ENCODE measurements at regions of chr7 and their contacts with region 1.

Region 1: GRCh38 chr7:134254311-134254710 is 62.4 kb downstream of the SLC35B4 start:
- DNase-seq: no peak
- H3K4me3 ChIP-seq: no peak overlapping the region
- H3K27ac ChIP-seq: no peak overlapping the region
- H3K4me1 ChIP-seq: no peaks in the 10 kb centered on the region
- H3K27me3 ChIP-seq: no peaks in the 10 kb centered on the region
- CTCF ChIP-seq: peak; percentile 16 to 60

Region 2: GRCh38 chr7:134140889-134141867 is 113.1 kb before region 1 on chr7:
- CTCF ChIA-PET with region 1: no interaction called
- dilution Hi-C with region 1: no loop called
- in situ Hi-C with region 1: no loop called
- intact Hi-C with region 1: loop called (anchors 2 kb)
- DNase-seq: peak; percentile 32
- H3K4me3 ChIP-seq: no peak overlapping the region
- H3K27ac ChIP-seq: no peak overlapping the region
- H3K4me1 ChIP-seq: no peaks in the 10 kb centered on the region
- H3K27me3 ChIP-seq: no peaks in the 10 kb centered on the region
- CTCF ChIP-seq: peak; percentile 86 to 95

Region 3: GRCh38 chr7:134483296-134483695 is 229.0 kb after region 1 on chr7:
- CTCF ChIA-PET with region 1: no interaction called
- dilution Hi-C with region 1: no loop called
- in situ Hi-C with region 1: no loop called
- intact Hi-C with region 1: no loop called
- DNase-seq: no peak
- H3K4me3 ChIP-seq: no peak overlapping the region
- H3K27ac ChIP-seq: no peak overlapping the region
- H3K4me1 ChIP-seq: peaks cover 15% of the 10 kb centered on the region
- H3K27me3 ChIP-seq: peaks cover 2% of the 10 kb centered on the region
- CTCF ChIP-seq: no peak